ENCODE measurements at regions of chr16 and their contacts with region 1.

Region 1: DNA sequence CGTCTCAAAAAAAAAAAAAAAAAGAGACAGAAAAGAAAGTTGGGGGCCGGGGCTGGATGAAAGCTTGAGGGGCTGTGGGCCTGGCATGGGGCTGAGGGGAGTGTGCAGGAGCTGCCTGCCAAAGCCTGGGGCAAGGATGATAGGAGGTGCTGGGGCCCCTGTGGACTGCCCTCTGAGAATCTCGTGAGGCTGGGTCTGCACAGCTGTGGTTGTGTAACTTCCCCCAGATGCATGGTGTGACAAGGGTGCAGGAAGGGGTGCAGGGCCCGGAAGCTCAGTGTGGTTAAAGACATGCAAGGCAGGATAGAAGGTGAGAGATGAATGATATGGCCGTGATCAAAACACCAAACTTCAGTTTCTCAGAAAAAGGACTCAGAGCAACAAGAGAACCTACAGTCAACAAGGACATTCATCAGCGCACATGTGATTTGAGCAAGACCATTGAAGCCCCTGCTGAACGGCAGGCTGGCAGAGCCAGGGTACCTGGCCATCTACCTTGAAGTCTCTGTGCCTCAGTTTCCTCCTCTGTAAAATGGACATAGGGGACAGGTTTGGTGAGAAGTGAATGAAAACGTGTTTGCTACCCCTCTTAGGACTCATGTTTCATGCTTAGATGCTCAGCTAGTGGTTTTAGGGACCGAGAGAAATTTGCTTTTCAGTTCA is 9.6 kb downstream of the IL32 start:
- DNase-seq: no peak
- ATAC-seq: no peak
- H3K4me3 Mint-ChIP-seq: no peak overlapping the region
- H3K27ac Mint-ChIP-seq: no peak overlapping the region
- H3K4me1 Mint-ChIP-seq: peaks cover 57% of the 10 kb centered on the region
- H3K27me3 Mint-ChIP-seq: peaks cover 12% of the 10 kb centered on the region
- CTCF ChIP-seq: no peak

Region 2: GRCh38 chr16:3087243-3088235 is 12.5 kb after region 1 on chr16:
- CTCF ChIA-PET with region 1: interaction called, 13 read pairs
- POLR2A ChIA-PET with region 1: no interaction called
- DNase-seq: peak; percentile 50
- ATAC-seq: peak; percentile 49
- H3K4me3 Mint-ChIP-seq: no peak overlapping the region
- H3K27ac Mint-ChIP-seq: peak overlapping the region; percentile 84
- H3K4me1 Mint-ChIP-seq: peaks cover 21% of the 10 kb centered on the region
- H3K27me3 Mint-ChIP-seq: no peaks in the 10 kb centered on the region
- CTCF ChIP-seq: no peak

Measured in WTC11 (cell line).